GM23248 (cell line): ENCODE measurements at regions of chr2 and their contacts with region 1.

Region 1: GRCh38 chr2:103161456-103162289 is 399.8 kb downstream of the TMEM182 start:
- DNase-seq: peak; percentile 75
- H3K4me3 ChIP-seq: no peak overlapping the region
- H3K27ac ChIP-seq: no peak overlapping the region
- H3K4me1 ChIP-seq: no peaks in the 10 kb centered on the region
- H3K27me3 ChIP-seq: no peaks in the 10 kb centered on the region

Region 2: DNA sequence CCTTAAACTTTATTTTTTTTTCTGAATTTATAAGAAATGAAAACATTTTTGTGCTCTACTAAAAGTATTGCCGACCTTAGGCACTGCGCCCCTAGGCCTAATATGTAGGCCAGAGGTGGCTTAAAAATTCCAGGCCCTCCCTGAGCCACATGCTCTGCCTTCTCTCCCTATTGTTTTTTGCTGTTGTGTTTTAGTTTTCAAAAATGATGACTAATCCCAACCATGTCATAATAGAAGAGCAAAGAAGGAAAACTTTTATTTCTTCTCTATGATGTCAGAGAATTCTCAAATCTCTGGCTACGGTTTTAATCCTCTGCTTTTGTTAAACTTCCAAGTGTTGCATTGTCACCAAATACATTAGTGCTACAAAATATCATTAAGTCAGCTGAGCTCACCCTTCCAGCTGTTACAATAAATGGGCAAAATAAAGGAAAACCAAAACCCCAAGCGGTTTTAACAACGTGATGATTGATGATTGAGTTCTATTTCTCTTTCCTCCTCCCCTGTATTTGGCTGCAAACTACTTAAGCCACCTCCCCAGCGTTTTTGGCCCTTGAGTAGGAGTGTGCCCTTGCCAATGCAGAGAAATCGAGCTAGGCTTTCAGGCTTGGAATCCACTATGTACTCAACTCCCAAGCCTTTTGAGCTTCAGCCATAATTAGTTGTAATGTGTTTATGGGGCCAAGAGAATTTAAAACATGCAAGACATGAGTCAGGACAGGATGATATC is 1528.7 kb after region 1 on chr2:
- in situ Hi-C with region 1: no loop called
- DNase-seq: peak; percentile 19
- H3K4me3 ChIP-seq: no peak overlapping the region
- H3K27ac ChIP-seq: no peak overlapping the region
- H3K4me1 ChIP-seq: no peaks in the 10 kb centered on the region
- H3K27me3 ChIP-seq: no peaks in the 10 kb centered on the region

Region 3: DNA sequence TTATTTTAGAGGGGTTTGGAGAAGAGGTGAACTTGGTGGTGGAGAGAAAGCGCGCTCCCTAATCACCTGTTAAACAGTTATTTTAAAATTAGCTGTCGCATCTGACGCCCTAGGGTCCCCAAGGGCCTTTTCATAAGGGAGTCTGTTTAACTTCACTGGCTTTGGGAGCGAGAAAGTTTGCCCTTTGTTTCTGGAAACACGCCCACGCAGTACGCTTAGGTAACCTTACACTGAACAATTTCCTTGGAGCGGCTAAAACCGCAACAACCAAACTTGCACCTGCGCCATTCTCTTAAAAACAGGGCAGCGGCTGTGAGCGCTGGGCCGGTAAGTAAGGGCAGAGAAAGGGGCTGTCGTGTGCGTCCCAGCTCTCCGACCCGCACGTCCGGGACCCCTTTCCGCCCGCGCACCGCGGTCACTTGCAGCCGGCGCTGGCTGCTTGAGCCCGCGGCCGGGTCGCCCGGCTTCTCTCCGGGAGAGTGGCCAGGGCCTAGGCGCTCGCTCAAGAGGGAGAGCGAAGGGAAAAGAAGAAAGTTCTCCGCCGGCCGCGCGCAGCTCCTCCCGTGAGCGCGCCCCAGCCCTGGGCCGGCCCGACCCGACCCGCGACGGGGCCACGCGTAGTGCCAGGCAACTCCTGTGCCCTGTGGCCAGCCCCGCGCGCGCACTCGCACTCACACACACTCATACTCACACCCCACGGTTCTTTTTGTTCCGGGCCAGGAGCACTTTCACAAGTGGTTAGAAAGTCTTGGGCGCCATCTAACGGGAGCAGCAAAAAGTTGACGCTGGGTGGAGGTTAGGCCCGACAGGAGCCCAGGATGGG is 1711.4 kb after region 1 on chr2:
- in situ Hi-C with region 1: loop called (anchors 25 kb)
- DNase-seq: peak; percentile 84
- H3K4me3 ChIP-seq: peak overlapping the region; percentile 79
- H3K27ac ChIP-seq: no peak overlapping the region
- H3K4me1 ChIP-seq: no peaks in the 10 kb centered on the region
- H3K27me3 ChIP-seq: peaks cover 41% of the 10 kb centered on the region